ENCODE measurements at regions of chr5 and their contacts with region 1.

Region 1: DNA sequence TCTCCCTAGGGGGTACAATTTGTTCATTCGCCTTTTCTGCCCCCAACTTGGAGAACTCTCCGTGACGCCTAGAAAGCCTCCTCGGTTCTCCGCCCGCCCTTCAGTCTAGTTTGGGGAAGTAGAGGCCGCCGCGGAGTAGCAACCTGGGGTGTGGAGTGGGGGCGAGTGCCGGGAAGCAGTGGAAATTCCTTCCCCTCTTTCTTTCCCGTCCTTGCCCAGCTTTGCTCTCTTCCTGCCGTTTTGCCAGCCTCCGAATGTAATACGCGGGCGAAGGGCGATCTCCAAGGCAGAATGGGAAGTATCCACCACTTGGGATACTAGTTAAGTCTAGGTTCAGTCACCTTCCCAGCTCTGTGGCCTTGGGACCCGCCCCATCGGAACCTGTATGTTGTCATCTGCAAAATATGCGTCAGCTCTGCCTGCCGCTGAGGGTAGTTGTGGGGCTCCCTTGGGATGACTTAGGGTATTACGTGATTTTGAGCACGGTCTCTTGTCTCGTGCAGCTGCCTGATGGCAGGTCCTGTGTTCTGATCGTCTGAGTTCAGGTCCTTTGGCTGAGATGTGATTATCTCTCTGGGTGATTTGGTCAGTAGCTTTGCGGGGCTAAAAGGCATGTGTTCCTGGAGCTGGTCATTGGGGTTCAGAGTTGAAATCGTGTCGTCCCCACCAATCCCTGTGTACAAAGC is 724 bp downstream of the PAM start:
- DNase-seq: peak; percentile 60
- H3K4me3 Mint-ChIP-seq: peak overlapping the region; percentile 96
- H3K27ac Mint-ChIP-seq: peak overlapping the region; percentile 96
- H3K4me1 Mint-ChIP-seq: peaks cover 58% of the 10 kb centered on the region
- H3K27me3 Mint-ChIP-seq: peaks cover 6% of the 10 kb centered on the region

Region 2: DNA sequence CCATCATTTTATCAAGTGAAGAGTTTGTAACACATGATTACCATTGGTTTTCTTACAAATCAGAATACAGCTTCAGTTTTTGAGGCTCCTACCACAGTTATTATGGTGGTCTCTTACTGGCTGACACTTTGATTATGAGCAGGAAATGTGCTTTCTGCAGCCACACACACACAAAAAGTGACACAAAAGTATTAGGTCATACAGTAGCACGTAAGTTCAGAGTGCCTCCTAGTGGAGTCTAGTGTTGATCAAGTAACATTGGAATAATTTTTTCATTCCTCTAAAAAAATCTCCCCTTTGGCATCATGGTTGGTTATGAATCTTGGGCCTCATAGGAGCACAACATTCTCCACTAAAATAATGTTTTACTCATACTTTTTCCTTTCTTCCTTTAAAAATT is 36.9 kb after region 1 on chr5:
- intact Hi-C with region 1: no loop called
- DNase-seq: no peak
- H3K4me3 Mint-ChIP-seq: no peak overlapping the region
- H3K27ac Mint-ChIP-seq: no peak overlapping the region
- H3K4me1 Mint-ChIP-seq: peaks cover 23% of the 10 kb centered on the region
- H3K27me3 Mint-ChIP-seq: no peaks in the 10 kb centered on the region

Region 3: DNA sequence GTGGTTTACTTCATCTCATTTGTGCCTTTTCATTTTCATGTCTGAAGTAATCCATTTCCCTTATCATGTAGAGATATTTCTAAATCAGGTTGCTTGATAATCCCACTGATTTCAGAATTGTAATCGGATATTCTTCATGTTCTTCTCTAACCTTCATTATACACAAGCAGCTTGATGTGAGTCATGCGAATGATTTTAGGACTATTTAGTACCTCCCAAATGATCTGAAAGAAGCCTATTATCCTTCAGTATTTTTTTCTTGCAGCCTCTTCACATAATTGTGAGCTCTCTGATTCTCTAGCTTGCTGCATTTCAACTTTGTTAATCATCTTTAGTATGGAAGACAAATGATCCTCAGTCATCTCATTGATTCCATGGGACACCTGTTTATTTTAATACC is 182.1 kb after region 1 on chr5:
- intact Hi-C with region 1: loop called (anchors 5 kb)
- DNase-seq: no peak
- H3K4me3 Mint-ChIP-seq: no peak overlapping the region
- H3K27ac Mint-ChIP-seq: no peak overlapping the region
- H3K4me1 Mint-ChIP-seq: peaks cover 16% of the 10 kb centered on the region
- H3K27me3 Mint-ChIP-seq: no peaks in the 10 kb centered on the region

Region 4: GRCh38 chr5:103119765-103120606 is 364.2 kb after region 1 on chr5 and contains the starts of genes GIN1 and PPIP5K2:
- intact Hi-C with region 1: loop called (anchors 1 kb)
- DNase-seq: peak; percentile 96
- H3K4me3 Mint-ChIP-seq: peak within 1 kb of the TSS; percentile 93
- H3K27ac Mint-ChIP-seq: peak within 1 kb of the TSS; percentile 96
- H3K4me1 Mint-ChIP-seq: peaks cover 41% of the 10 kb centered on the region
- H3K27me3 Mint-ChIP-seq: no peaks in the 10 kb centered on the region
- total RNA-seq, gene GIN1: 8.6 and 9.3 TPM in 2 replicates
- total RNA-seq, gene PPIP5K2: 47.6 and 52.7 TPM in 2 replicates